A549 (cell line): ENCODE measurements at regions of chr2 and their contacts with region 1.

Region 1: DNA sequence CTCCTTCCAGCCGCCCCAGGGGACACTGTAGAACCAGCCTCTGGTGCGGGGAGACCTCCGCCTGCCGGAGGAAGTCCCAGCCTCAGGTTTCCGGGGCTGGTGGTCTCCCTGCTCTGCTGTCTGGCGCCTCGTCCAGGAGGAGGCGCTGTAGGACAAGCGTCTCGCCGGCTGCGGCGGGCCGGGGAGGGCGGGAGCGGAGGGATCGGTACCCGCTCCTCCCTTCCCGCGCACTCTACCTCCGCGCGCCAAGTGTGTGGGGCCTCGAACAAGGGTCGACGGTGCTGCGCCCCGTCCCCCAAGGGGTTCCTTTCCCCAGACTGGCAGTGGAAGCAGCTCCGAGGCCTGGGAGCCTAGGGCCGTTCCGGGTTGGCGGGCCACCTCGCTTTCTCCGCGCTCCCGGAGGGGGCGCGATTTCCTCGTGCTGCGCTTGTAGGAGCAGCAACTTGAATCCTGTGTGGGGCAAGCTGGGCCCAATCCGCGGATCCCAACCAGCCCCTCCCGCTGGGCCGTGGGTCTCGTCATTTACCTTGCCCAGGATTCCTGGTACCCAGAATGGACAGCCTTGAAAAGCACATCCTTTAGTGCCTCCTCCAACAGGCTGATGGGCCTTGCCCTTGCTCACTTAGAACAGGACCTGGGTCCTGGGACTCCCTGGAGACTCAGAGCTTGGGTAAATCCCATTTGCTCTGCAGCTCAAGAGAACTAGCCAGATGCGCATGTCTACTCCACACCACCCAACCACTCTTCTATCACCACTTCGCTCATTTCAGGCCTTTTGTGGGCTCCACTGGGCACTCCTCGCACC is 10.6 kb upstream of the HOXD4 start:
- DNase-seq: peak; percentile 84 to 85
- ATAC-seq: peak; percentile 89 to 96
- H3K4me3 ChIP-seq: peak overlapping the region; percentile 49
- H3K27ac ChIP-seq: peak overlapping the region; percentile 87 to 99
- H3K4me1 ChIP-seq: no peaks in the 10 kb centered on the region
- CTCF ChIP-seq: peak; percentile 100
- EP300 ChIP-seq: no peak
- POLR2A ChIP-seq: peak; percentile 32; the same call in 1 of the 2 replicates
- RAD21 ChIP-seq: peak; percentile 90 to 100

Region 2: DNA sequence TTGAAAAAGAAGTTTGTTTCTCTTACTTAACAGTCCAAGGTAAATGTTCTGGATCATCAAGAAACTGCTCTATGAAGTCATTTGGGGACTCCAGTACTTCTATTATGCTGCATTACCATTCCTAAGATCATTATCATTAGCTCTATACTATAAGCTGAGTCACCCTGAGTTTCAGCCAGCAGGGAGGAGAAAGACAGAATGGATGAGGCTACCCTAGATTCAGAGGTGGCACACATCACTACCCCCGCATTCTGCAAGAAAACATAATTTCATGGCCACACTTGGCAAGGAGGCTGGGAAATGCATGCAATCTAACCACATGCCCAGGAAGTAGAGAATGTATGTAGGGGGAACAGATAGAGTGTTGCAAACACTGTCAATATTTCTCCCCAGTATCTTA is 122.0 kb before region 1 on chr2:
- CTCF ChIA-PET with region 1: no interaction called
- POLR2A ChIA-PET with region 1: no interaction called
- DNase-seq: no peak
- ATAC-seq: no peak
- H3K4me3 ChIP-seq: no peak overlapping the region
- H3K27ac ChIP-seq: no peak overlapping the region
- H3K4me1 ChIP-seq: no peaks in the 10 kb centered on the region
- CTCF ChIP-seq: no peak
- EP300 ChIP-seq: no peak
- POLR2A ChIP-seq: no peak
- RAD21 ChIP-seq: no peak

Region 3: GRCh38 chr2:176126929-176127773 is 13.6 kb before region 1 on chr2:
- CTCF ChIA-PET with region 1: interaction called, 46 read pairs
- POLR2A ChIA-PET with region 1: interaction called, 3 read pairs
- DNase-seq: peak in 1 of 2 experiments; percentile 52
- ATAC-seq: 0 out of 6 replicates have a peak, but pooled peaks of 1 of the 2 experiments have one; percentile 10
- H3K4me3 ChIP-seq: no peak overlapping the region
- H3K27ac ChIP-seq: no peak overlapping the region
- H3K4me1 ChIP-seq: 0 out of 3 replicates have a peak, but pooled peaks cover 3% of the 10 kb centered on the region
- CTCF ChIP-seq: peak; percentile 96
- EP300 ChIP-seq: no peak
- POLR2A ChIP-seq: no peak
- RAD21 ChIP-seq: peak; percentile 87 to 91

Region 4: DNA sequence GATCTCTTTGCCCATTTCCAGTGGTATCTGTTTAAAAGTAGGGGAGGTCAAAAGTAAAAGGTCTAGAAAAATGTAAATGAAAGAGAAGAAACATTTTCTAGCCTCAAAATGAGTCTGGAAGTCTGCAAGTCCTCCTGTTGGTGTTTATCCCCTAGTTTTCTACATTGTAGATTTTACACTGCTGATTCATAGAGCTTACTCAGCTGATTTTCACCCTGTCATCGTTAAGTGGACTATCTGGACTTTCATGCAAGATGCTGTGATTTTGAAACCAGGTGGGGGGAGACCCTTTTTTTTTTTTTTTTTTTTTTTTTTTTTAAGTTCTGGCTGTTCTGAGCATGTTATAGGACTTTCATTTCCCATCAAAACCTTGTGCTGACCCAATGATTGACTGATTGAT is 26.7 kb after region 1 on chr2:
- CTCF ChIA-PET with region 1: interaction called, 12 read pairs
- POLR2A ChIA-PET with region 1: no interaction called
- DNase-seq: no peak
- ATAC-seq: no peak
- H3K4me3 ChIP-seq: no peak overlapping the region
- H3K27ac ChIP-seq: no peak overlapping the region
- H3K4me1 ChIP-seq: no peaks in the 10 kb centered on the region
- CTCF ChIP-seq: no peak
- EP300 ChIP-seq: no peak
- POLR2A ChIP-seq: no peak
- RAD21 ChIP-seq: no peak

Region 5: GRCh38 chr2:176398243-176399073 is 257.7 kb after region 1 on chr2:
- CTCF ChIA-PET with region 1: no interaction called
- POLR2A ChIA-PET with region 1: no interaction called
- DNase-seq: no peak
- ATAC-seq: no peak
- H3K4me3 ChIP-seq: no peak overlapping the region
- H3K27ac ChIP-seq: no peak overlapping the region
- H3K4me1 ChIP-seq: peaks cover 5% of the 10 kb centered on the region; the same call in 1 of the 3 replicates
- CTCF ChIP-seq: no peak
- EP300 ChIP-seq: no peak
- POLR2A ChIP-seq: no peak
- RAD21 ChIP-seq: no peak

Region 6: GRCh38 chr2:176432434-176432833 is 291.7 kb after region 1 on chr2:
- CTCF ChIA-PET with region 1: interaction called, 11 read pairs
- POLR2A ChIA-PET with region 1: no interaction called
- DNase-seq: no peak
- ATAC-seq: no peak
- H3K4me3 ChIP-seq: no peak overlapping the region
- H3K27ac ChIP-seq: no peak overlapping the region
- H3K4me1 ChIP-seq: no peaks in the 10 kb centered on the region
- CTCF ChIP-seq: no peak
- EP300 ChIP-seq: no peak
- POLR2A ChIP-seq: no peak
- RAD21 ChIP-seq: no peak

Region 7: DNA sequence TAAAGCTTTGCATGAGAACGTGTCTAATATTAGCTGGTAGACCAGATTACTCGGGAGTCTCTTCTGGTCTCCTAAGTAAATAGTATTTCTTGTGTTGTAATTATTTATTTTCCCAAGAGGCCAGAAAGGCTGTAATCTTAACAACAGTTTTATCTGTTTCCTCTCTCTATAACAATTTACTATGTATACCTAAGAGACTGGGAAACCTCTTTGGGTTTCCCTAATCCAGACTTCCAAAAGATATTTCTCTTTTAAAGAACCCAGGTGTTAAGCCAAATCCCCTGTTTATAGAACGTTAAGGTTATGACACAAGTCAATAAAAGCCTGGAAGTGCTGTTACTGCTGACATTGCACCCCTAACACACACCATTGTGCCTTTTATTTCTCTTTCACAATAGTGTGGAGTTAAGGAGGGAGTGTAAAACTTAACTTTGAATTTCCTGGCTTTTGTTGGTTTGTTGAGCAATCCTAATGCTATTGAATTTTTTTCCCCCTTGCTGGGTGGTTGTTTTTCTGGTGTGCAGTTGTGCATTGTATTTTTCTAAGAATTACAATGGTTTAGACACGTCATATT is 321.2 kb after region 1 on chr2:
- CTCF ChIA-PET with region 1: interaction called, 181 read pairs
- POLR2A ChIA-PET with region 1: no interaction called
- DNase-seq: no peak
- ATAC-seq: no peak
- H3K4me3 ChIP-seq: no peak overlapping the region
- H3K27ac ChIP-seq: no peak overlapping the region
- H3K4me1 ChIP-seq: no peaks in the 10 kb centered on the region
- CTCF ChIP-seq: no peak
- EP300 ChIP-seq: no peak
- POLR2A ChIP-seq: no peak
- RAD21 ChIP-seq: no peak

Region 8: GRCh38 chr2:176574484-176575236 is 433.9 kb after region 1 on chr2:
- CTCF ChIA-PET with region 1: interaction called, 18 read pairs
- POLR2A ChIA-PET with region 1: no interaction called
- DNase-seq: no peak
- ATAC-seq: no peak
- H3K4me3 ChIP-seq: no peak overlapping the region
- H3K27ac ChIP-seq: no peak overlapping the region
- H3K4me1 ChIP-seq: no peaks in the 10 kb centered on the region
- CTCF ChIP-seq: no peak
- EP300 ChIP-seq: no peak
- POLR2A ChIP-seq: no peak
- RAD21 ChIP-seq: no peak

Region 9: DNA sequence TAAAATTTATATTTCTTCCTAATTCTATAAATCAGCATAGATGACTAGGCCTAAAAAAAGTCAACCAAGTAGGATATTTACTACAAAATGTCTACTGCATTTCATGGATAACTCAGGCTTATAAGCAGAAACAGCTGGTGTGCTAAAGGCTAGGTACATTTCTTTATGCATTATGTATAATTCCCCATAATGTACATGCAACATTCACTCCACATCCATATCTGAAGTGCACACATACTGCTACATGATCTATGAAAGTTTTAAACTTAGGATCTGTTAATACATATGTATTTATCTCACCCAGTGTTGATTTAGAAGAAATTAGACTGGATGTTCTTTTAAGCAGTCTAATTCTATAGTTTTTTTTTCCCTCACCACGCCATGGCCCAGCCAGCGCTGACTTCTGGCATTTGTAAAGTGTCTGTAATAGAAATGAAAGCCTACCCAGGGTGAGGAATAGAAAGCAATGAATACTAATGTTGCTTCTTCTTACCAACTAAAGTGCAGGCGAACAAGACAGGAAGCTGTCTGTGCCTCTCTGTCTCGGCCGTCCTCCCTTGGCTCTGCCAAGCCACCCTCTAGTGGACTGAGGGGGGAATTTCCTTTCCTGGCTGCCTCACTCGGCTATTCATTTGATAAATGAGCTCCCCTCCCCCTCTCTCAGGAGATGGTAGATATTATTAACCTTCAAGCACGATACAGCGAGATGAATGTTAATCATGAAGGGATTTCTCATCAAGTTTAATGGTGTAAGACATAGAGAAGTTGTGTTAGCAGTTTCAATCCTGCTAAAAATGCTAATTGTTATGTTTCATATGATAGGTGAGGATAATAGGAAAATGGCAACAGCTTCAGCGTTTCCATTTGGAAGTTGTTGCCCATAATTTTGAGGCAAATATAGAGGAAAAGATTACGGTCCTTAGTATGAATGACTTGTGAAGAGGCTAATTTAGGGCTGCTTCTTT is 513.0 kb after region 1 on chr2:
- CTCF ChIA-PET with region 1: interaction called, 216 read pairs
- POLR2A ChIA-PET with region 1: interaction called, 9 read pairs
- DNase-seq: peak; percentile 44 to 74
- ATAC-seq: peak; percentile 97 to 98
- H3K4me3 ChIP-seq: no peak overlapping the region
- H3K27ac ChIP-seq: no peak overlapping the region
- H3K4me1 ChIP-seq: no peaks in the 10 kb centered on the region
- CTCF ChIP-seq: peak; percentile 53
- EP300 ChIP-seq: no peak
- POLR2A ChIP-seq: no peak
- RAD21 ChIP-seq: peak; percentile 38 to 49; a peak in 4 of 5 replicates